Posterior vena cava (tissue), 2 donors: ENCODE measurements at regions of chr11 and their contacts with region 1.

Region 1: GRCh38 chr11:82546661-82547557 is 186.8 kb downstream of the FAM181B start:
- DNase-seq: no peak

Region 2: DNA sequence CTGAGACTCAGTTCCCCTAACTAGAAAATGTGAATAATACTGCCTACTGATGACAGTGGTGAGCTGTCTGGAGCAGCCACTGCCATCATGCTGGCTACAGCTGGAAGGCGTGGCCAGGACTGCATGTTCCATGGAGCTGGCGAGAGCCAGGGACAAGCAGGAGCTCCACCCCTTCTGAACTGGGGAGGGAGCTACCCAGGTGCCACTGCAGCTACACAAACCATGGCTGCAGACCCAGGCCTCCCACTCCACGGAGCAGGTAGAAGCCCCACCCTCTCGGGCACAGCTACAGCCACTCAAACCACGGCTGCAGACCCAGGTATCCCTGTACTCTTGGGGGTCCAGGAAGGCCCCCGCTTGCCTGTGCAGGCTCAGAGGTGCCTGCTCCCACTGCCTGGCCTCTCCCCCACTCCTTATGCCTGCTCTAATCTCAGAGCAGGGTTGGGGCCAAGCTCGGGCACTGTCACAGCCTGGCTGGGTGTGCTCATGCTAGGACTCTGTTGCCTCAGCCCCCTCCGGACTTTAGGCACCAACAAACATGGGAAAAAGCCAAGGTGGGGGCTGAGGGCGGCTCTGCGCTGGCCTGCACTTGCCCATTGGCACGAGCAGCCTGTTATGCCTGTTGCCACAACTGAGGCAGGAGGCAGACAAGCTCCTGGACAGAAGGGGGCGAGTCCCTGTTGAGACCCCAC is 473.1 kb after region 1 on chr11:
- intact Hi-C with region 1: loop called in 1 of 2 experiments (anchors 5 kb)
- DNase-seq: no peak